Heart right ventricle (tissue), 16 donors: ENCODE measurements at regions of chr9 and their contacts with region 1.

Region 1: DNA sequence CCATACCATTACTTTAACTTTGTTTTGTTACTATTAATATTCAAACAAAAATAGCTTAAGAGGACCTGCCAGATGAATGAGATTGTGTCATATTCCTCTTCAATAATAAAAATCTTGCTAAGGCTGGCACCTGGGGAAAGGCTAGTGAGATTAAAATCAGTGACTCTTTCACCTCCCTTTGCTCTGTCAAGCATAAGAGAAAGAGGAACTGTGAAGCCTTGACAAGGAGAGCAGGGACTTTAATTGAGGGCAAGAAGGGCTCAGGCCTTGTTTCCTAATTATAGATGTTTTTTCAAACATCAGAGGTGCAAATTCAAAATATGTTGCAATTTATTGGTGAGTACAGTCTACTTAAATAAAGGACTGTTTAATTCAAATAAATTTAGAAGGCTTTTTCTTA is 91.7 kb downstream of the SPATA31D1 start:
- DNase-seq: no peak
- ATAC-seq: no peak
- H3K4me3 ChIP-seq: no peak overlapping the region
- H3K27ac ChIP-seq: no peak overlapping the region
- H3K4me1 ChIP-seq: no peaks in the 10 kb centered on the region
- H3K27me3 ChIP-seq: no peaks in the 10 kb centered on the region
- CTCF ChIP-seq: no peak

Region 2: DNA sequence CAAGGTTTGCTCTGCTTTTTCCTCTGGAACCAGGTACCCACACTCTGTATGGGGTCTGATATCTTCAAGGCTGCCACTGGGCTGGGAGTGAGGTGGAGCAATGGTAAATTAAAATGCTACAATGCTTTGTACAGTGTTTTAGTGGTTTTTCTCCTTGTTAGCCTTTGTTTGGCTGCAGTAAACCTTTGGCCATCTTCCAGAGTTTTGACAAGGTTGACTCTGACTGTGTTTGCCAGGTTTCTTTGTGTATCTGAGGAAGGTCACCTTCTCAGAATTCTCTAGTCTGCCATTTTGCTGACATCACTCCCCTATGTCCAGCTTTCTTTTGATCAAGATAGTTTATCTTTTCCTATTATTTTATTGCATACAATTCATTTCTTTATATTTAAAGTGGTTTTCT is 80.5 kb before region 1 on chr9:
- intact Hi-C with region 1: no loop called
- DNase-seq: no peak
- ATAC-seq: peak in 1 of 8 donors; percentile 25
- H3K4me3 ChIP-seq: no peak overlapping the region
- H3K27ac ChIP-seq: no peak overlapping the region
- H3K4me1 ChIP-seq: peaks cover 0 to 5% (median 0%) of the 10 kb centered on the region in 9 donors
- H3K27me3 ChIP-seq: no peaks in the 10 kb centered on the region
- CTCF ChIP-seq: no peak

Region 3: GRCh38 chr9:82021198-82021597 is 59.1 kb before region 1 on chr9:
- intact Hi-C with region 1: loop called in 1 of 10 experiments (anchors 10 kb)
- DNase-seq: no peak
- ATAC-seq: peak in 3 of 8 donors; percentile 25 to 94 (median 65)
- H3K4me3 ChIP-seq: no peak overlapping the region
- H3K27ac ChIP-seq: no peak overlapping the region
- H3K4me1 ChIP-seq: peaks cover 0 to 6% (median 0%) of the 10 kb centered on the region in 9 donors
- H3K27me3 ChIP-seq: no peaks in the 10 kb centered on the region
- CTCF ChIP-seq: no peak